ENCODE measurements at regions of chr9 and their contacts with region 1.

Region 1: DNA sequence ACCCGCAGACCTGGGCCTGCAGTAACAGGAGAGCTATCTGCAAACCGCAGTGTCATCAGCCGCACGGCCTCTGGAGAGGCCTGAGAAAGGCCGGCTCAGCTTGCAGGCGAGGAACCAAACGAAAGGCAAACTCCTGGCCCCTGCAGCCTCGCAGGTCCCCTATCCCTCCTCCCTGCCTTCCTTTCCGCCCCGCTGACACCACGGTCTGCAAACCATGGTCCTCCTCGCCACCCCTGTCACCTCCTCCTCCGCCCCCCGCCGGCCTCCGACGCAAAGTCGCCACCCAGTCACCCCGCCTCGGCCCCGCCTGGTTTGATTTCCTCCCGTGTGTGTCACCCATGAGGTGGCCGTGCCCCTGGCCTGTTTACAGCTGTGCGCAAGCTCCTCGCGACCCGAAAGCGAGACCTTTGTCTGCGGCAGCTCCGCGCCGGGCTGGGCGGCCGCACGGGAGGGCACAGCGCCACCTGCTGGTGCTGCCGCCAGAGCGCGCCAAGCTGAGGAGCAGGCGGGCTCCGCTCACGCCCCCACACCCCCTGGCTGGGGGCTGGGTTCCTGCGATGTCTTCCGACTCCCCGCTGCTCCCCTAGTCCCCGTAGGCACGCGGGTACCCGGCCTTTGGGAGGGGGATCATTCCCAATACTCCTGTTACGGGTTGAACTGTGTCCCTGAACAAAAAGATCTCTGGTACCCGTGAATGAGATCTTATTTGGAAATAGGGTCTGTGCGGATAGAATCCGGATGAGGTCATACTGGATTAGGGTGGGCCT is 19.4 kb downstream of the GBGT1 start:
- DNase-seq: peak; percentile 83
- ATAC-seq: peak; percentile 32

Region 2: DNA sequence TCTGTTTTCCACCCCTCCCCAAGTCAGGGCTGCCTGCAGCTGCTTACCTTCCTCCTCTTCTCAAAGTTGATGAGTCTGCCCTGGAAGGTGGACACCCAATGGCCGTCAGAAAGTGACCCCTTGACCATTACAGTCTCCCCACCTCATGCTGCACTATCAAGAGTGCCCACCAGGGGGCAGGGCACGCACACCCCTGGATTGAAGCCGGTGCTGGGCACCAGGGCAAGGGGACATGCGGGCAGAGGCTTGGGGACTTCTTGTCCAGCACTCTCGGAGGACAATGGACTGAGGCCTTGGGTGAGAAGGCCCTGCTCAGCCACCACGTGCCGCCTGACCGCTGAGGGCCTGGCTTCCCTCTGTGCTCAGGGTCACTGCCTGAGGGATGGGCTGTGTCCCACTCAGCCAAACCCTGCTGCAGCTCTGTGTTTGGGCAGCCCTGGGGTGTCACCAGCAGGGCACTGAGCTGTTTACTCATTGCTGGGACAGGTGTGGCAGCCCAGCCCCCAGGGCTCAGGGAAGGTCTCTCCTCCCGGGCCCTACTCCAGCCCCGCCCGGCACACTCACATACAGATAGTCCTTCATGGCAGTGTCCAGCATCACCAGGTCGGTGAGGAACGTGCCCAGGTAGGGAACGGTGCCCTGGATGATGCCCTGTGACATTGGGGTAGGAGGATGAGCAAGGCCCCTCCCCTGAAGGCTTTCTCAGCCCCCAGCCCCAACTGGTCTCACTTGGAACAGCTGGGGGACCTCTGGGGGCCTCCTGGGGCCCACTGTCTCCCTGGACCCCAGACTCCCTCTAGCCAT is 40.9 kb before region 1 on chr9:
- intact Hi-C with region 1: loop called (anchors 2 kb)
- DNase-seq: peak; percentile 82
- ATAC-seq: peak; percentile 72

Measured in Right ventricle myocardium superior (tissue), 1 donor.